Caco-2 (cell line): ENCODE measurements at regions of chr3 and their contacts with region 1.

Region 1: GRCh38 chr3:15205934-15206661 is at the start of gene CAPN7:
- DNase-seq: peak; percentile 93 to 96
- H3K4me3 ChIP-seq: peak within 1 kb of the TSS; percentile 85
- H3K4me3 Mint-ChIP-seq: peak within 1 kb of the TSS; percentile 87
- H3K27ac Mint-ChIP-seq: peak within 1 kb of the TSS; percentile 77
- H3K4me1 ChIP-seq: peaks cover 5% of the 10 kb centered on the region; the same call in 1 of the 2 replicates
- H3K4me1 Mint-ChIP-seq: peaks cover 21% of the 10 kb centered on the region
- H3K27me3 ChIP-seq: no peaks in the 10 kb centered on the region
- H3K27me3 Mint-ChIP-seq: no peaks in the 10 kb centered on the region
- CTCF ChIP-seq: peak; percentile 53 to 54
- total RNA-seq, gene CAPN7: 37.0 and 40.3 TPM in 2 replicates

Region 2: DNA sequence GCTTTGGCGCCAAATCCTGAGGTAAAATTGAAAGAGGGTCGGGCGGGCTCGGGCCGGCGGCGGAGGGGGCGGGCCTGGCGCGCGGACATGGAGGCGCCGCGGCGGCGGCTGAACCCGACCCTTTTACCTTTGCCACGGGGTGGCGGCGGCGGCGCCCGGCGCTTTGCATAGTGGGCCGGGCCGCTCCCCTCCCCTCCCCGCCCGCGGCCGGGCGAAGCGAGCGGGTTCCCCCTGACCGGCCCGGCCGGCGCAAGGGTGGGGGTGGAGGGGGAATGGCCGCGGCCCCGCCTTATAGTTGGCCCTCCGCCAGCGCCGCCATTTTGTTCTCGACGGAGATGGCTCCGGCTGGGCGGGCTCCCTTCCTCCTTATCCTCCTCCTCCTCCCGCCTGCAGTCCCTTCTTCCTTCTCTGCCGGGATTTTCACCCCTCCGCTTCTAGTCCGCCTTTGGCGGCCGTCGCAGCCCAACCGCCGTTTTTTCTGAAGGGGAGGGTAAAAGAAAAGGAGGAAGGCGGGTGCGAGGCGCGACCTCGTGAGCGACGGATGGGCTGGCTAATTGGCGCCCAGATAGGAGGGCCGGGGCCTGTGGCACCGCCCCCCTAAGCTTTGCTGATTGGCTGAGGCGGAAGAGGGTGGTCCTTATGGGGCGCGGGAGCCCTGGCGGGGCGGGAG is 258.1 kb before region 1 on chr3:
- CTCF ChIA-PET with region 1: no interaction called
- POLR2A ChIA-PET with region 1: no interaction called
- intact Hi-C with region 1: loop called (anchors 10 kb)
- DNase-seq: peak; percentile 96 to 97
- H3K4me3 ChIP-seq: peak overlapping the region; percentile 80
- H3K4me3 Mint-ChIP-seq: peak overlapping the region; percentile 97
- H3K27ac Mint-ChIP-seq: peak overlapping the region; percentile 100
- H3K4me1 ChIP-seq: no peaks in the 10 kb centered on the region
- H3K4me1 Mint-ChIP-seq: peaks cover 8% of the 10 kb centered on the region
- H3K27me3 ChIP-seq: no peaks in the 10 kb centered on the region
- H3K27me3 Mint-ChIP-seq: no peaks in the 10 kb centered on the region
- CTCF ChIP-seq: no peak

Region 3: DNA sequence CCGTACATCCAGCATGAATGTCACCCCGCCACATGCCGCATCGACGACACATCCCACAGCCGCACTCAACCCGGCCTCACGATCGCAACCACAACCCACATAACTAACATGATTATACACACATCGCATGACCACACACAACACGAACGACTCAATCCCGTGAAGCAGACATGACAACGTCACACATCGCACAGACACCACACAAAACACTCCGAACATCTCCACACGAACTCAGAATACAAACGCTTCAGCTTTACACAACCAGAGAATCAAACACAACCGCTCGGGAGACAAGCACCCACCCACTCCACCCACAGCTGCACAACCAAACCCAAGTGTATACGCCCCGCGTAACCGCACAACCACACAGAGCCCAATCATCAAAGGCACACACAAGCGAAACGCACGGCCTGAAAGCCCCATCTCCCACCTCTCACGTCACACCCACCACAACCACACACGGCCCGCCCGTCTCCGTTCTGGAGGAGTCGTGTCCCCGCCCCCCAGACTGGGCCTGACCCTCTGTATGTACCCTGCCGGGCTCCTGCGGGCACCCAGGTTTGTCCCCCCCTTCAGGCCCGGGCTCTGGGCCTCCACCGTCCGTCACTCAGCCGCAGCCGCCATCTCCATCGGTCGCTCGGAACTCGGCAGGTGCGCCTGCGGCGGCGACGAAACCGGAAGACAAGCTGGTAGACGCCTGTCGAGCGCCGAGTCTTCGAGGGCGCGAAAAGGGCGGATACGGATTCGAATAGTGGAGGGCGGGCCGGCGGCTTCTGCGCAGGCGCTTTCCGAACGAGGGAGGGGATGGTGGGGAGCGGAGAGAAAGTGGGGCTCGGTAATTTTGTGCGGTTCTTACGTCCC is 107.4 kb before region 1 on chr3 and contains the start of gene RBSN:
- CTCF ChIA-PET with region 1: interaction called, 5 read pairs
- POLR2A ChIA-PET with region 1: interaction called, 10 read pairs
- intact Hi-C with region 1: loop called (anchors 2 kb)
- DNase-seq: peak; percentile 94
- H3K4me3 ChIP-seq: peak within 1 kb of the TSS; percentile 85
- H3K4me3 Mint-ChIP-seq: peak within 1 kb of the TSS; percentile 100
- H3K27ac Mint-ChIP-seq: peak within 1 kb of the TSS; percentile 98
- H3K4me1 ChIP-seq: peaks cover 7% of the 10 kb centered on the region; the same call in 1 of the 2 replicates
- H3K4me1 Mint-ChIP-seq: peaks cover 16% of the 10 kb centered on the region
- H3K27me3 ChIP-seq: no peaks in the 10 kb centered on the region
- H3K27me3 Mint-ChIP-seq: no peaks in the 10 kb centered on the region
- CTCF ChIP-seq: no peak
- total RNA-seq, gene RBSN: 18.5 and 19.7 TPM in 2 replicates

Region 4: DNA sequence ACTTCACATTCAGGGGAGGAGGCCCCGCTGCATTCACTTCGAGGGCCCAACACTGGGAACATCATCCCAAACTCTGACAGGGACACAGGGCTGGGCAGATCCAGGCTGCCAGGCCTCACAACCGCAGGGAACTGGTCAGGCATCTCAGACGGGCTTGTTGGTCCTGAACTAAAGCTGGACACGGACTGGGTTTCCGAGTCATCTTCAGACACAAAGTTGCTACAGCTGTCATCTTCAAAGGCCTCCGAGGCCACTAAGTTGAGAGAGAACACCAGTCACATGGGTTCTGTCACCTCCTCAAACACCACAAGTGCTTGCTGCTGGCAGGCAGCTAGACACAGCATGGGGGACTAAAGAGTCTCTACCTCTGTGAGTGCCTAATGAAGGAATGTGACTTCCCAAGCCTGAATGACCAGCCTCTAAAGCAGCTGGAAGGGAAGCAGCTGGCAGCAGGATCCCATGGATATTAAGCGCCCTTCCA is 50.8 kb after region 1 on chr3:
- CTCF ChIA-PET with region 1: no interaction called
- POLR2A ChIA-PET with region 1: no interaction called
- intact Hi-C with region 1: no loop called
- DNase-seq: no peak
- H3K4me3 ChIP-seq: no peak overlapping the region
- H3K4me3 Mint-ChIP-seq: no peak overlapping the region
- H3K27ac Mint-ChIP-seq: no peak overlapping the region
- H3K4me1 ChIP-seq: no peaks in the 10 kb centered on the region
- H3K4me1 Mint-ChIP-seq: no peaks in the 10 kb centered on the region
- H3K27me3 ChIP-seq: no peaks in the 10 kb centered on the region
- H3K27me3 Mint-ChIP-seq: no peaks in the 10 kb centered on the region
- CTCF ChIP-seq: no peak

Region 5: GRCh38 chr3:15377961-15378791 is 172.1 kb after region 1 on chr3:
- CTCF ChIA-PET with region 1: no interaction called
- POLR2A ChIA-PET with region 1: no interaction called
- intact Hi-C with region 1: loop called (anchors 1 kb)
- DNase-seq: peak; percentile 92 to 93
- H3K4me3 ChIP-seq: no peak overlapping the region
- H3K4me3 Mint-ChIP-seq: peak overlapping the region; percentile 19
- H3K27ac Mint-ChIP-seq: peak overlapping the region; percentile 57
- H3K4me1 ChIP-seq: 0 out of 2 replicates have a peak, but pooled peaks cover 5% of the 10 kb centered on the region
- H3K4me1 Mint-ChIP-seq: peaks cover 6% of the 10 kb centered on the region
- H3K27me3 ChIP-seq: no peaks in the 10 kb centered on the region
- H3K27me3 Mint-ChIP-seq: no peaks in the 10 kb centered on the region
- CTCF ChIP-seq: peak; percentile 76 to 81

Region 6: DNA sequence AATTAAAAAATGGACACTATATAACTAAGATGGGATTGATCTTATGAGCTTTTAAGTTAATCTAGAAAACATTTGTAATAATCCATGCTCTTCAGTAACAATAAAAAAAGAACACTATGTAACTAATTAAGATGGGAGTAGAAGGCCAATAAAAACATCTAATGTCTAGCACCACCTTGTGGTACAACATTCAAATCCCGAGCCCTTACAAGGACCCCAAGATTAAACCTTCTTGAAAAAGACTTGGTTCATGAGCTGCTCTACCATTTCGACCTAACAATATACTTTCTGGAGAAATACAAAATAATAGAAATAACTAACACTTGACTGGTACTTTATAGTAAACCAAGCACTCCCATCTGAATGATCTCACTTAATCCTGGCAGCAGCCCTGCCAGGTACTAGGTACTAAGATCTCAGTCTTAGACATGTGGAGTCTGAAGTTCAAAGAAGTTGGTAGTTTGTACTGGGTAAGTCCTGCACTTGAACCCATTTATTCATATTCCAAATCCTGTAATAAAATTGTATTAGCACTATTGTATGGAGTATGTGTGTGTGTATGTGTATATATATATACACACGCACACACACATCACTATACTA is 199.5 kb after region 1 on chr3:
- CTCF ChIA-PET with region 1: interaction called, 8 read pairs
- POLR2A ChIA-PET with region 1: no interaction called
- intact Hi-C with region 1: loop called (anchors 1 kb)
- DNase-seq: peak in 1 of 2 experiments; percentile 39
- H3K4me3 ChIP-seq: no peak overlapping the region
- H3K4me3 Mint-ChIP-seq: no peak overlapping the region
- H3K27ac Mint-ChIP-seq: no peak overlapping the region
- H3K4me1 ChIP-seq: no peaks in the 10 kb centered on the region
- H3K4me1 Mint-ChIP-seq: no peaks in the 10 kb centered on the region
- H3K27me3 ChIP-seq: no peaks in the 10 kb centered on the region
- H3K27me3 Mint-ChIP-seq: no peaks in the 10 kb centered on the region
- CTCF ChIP-seq: peak; percentile 42 to 58